Psoas muscle (tissue), 8 donors: ENCODE measurements at regions of chr16 and their contacts with region 1.

Region 1: DNA sequence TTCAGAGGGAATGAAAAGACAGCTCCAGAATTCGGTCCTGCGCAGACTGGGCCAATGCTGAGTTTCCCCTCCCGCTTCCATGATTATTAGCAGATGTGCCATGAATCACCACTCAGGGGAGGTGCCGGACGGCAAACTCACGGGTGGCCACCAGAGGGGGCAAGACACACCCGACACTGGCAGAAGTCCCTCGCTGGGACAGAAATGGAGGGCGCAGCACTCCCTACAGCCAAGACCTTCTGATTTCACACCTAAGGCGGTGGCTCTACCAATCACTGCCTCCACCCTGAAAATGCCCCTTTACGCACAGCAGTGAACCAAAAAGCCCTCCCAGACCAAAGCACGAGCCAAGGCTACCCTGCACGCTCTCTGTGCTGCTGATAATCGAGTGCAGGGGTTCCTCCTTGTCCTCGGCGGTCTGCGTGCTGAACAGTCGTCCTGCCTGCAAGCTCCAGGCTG is 26.8 kb downstream of the TRAP1 start:
- DNase-seq: peak; percentile 91 to 96
- ATAC-seq: peak; percentile 94 to 98 (median 96)
- H3K4me3 ChIP-seq: peak overlapping the region; percentile 46
- H3K27ac ChIP-seq: peak overlapping the region; percentile 52
- H3K4me1 ChIP-seq: peaks cover 30% of the 10 kb centered on the region
- H3K27me3 ChIP-seq: no peaks in the 10 kb centered on the region
- CTCF ChIP-seq: peak; percentile 96

Region 2: DNA sequence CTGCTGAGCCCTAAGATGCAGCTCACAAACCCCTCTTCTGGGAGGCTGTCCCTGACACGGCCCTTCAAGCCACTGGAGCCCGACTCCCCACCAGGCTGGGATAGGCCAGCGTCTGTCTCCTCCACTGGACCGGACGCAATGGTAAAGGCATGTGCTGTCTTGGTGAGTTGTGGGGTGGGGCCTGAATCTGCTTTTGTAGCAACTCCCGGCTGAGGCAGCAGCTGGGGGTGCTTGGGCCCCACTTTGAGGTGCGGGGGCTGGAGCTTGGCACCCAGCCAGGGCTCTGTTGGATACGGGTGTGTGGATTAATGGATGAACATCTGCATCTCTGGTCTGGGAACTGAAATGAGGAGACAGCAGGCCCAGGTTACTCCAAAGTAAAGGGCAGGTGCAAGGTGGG is 109.8 kb before region 1 on chr16:
- intact Hi-C with region 1: no loop called
- DNase-seq: peak in 1 of 2 donors; percentile 34
- ATAC-seq: no peak
- H3K4me3 ChIP-seq: no peak overlapping the region
- H3K27ac ChIP-seq: no peak overlapping the region
- H3K4me1 ChIP-seq: no peaks in the 10 kb centered on the region
- H3K27me3 ChIP-seq: no peaks in the 10 kb centered on the region
- CTCF ChIP-seq: no peak

Region 3: DNA sequence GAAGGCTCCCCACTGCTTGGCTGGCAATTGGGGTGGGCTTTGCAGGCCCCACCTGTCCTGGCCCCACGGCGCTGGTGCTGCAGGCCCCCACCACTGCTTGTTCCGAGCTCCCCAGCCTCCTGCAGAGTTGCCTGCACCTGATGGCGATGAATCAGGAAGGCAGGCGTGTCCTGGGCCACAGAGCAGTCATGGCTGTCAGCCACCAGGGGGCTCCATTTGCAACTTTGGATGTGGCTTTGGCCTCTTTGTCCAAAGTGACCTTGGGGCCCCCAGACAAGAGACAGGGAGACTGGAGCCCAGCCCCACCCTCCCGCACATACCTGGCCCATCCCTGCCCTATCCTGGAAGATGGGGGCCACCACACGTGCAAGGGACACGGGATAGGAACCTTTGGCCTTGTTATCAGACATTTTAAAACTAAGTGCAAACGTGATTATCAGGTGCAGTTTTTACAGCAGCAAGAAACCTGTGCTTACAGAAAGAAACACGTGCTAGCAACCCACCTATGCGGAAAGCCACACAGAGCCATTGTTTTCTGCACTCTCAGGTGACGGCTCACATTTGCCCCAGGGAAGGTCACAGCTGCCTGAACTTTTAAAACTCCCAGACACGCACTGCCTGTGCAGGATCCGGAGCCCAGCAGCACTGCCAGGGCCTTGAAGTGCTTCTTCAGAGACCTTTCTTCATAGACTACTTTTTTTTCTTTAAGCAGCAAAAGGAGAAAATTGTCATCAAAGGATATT is 36.1 kb before region 1 on chr16 and contains the start of gene DNASE1:
- intact Hi-C with region 1: no loop called
- DNase-seq: peak; percentile 39 to 74
- ATAC-seq: peak; percentile 51 to 76 (median 63)
- H3K4me3 ChIP-seq: no peak within 1 kb of the TSS
- H3K27ac ChIP-seq: no peak within 1 kb of the TSS
- H3K4me1 ChIP-seq: no peaks in the 10 kb centered on the region
- H3K27me3 ChIP-seq: no peaks in the 10 kb centered on the region
- CTCF ChIP-seq: peak; percentile 53
- total RNA-seq, gene DNASE1: 1.6 to 7.3 (median 2.6) TPM

Region 4: DNA sequence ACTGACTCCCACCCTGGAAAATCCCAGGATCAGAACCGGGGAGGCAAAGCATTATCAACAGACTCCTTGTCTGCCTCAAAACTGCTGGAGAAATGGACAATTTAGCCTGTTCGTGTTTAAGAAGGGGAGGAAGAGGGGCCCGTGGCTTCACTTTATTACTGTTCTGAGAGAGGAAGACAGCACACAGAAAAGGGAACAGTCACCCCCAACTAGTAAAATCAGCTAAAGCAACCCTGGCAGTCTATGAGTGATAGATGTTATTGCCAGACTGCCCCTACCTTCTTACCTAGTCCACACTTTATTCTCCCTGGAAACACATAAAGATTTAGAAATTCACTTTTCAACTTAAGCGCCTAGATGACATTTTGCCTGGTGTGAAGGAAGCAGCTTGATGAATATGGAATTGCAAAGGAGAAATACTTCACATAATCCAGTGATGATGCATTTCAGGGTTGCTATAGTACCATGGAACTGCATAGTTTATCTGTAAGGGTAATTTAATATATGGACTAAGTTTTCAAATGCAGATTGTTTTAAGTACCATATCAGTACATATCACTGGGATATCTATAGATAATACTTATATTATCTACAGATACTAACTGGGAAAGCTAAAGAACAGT is 63.7 kb after region 1 on chr16:
- intact Hi-C with region 1: loop called (anchors 5 kb)
- DNase-seq: no peak
- ATAC-seq: peak in 3 of 4 donors; percentile 36 to 59 (median 44)
- H3K4me3 ChIP-seq: no peak overlapping the region
- H3K27ac ChIP-seq: no peak overlapping the region
- H3K4me1 ChIP-seq: peaks cover 27% of the 10 kb centered on the region
- H3K27me3 ChIP-seq: no peaks in the 10 kb centered on the region
- CTCF ChIP-seq: no peak

Region 5: GRCh38 chr16:3873482-3874173 is 183.1 kb after region 1 on chr16:
- intact Hi-C with region 1: loop called in 1 of 2 experiments (anchors 2 kb)
- DNase-seq: no peak
- ATAC-seq: peak; percentile 16 to 44 (median 34)
- H3K4me3 ChIP-seq: peak overlapping the region; percentile 21
- H3K27ac ChIP-seq: peak overlapping the region; percentile 73
- H3K4me1 ChIP-seq: peaks cover 95% of the 10 kb centered on the region
- H3K27me3 ChIP-seq: no peaks in the 10 kb centered on the region
- CTCF ChIP-seq: no peak